Psoas muscle (tissue), 8 donors: ENCODE measurements at regions of chr15 and their contacts with region 1.

Region 1: GRCh38 chr15:56232058-56232457 is 11.6 kb downstream of the RFX7 start:
- DNase-seq: no peak
- ATAC-seq: no peak
- H3K4me3 ChIP-seq: no peak overlapping the region
- H3K27ac ChIP-seq: no peak overlapping the region
- H3K4me1 ChIP-seq: peaks cover 18% of the 10 kb centered on the region
- H3K27me3 ChIP-seq: no peaks in the 10 kb centered on the region
- CTCF ChIP-seq: no peak

Region 2: DNA sequence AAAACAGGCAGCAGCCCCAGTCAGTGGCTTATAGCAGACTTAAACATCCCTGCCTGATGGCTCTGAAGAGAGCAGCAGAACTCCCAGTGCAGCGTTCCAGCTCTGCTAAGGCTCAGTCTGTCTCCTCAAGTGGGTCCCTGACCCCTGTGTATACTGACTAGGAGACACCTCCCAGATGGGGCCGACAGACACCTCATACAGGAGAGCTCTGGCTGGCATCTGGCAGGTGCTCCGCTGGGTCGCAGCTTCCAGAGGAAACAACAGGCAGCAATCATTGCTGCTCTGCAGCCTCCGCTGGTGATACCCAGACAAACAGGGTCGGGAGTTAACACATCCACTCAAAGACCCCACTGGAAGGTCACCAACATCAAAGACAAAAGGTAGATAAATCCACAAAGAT is 81.9 kb before region 1 on chr15:
- intact Hi-C with region 1: loop called in 1 of 2 experiments (anchors 10 kb)
- DNase-seq: no peak
- ATAC-seq: no peak
- H3K4me3 ChIP-seq: no peak overlapping the region
- H3K27ac ChIP-seq: no peak overlapping the region
- H3K4me1 ChIP-seq: peaks cover 3% of the 10 kb centered on the region
- H3K27me3 ChIP-seq: no peaks in the 10 kb centered on the region
- CTCF ChIP-seq: no peak

Region 3: GRCh38 chr15:56176996-56177395 is 55.1 kb before region 1 on chr15:
- intact Hi-C with region 1: no loop called
- DNase-seq: no peak
- ATAC-seq: peak; percentile 49 to 85 (median 79)
- H3K4me3 ChIP-seq: no peak overlapping the region
- H3K27ac ChIP-seq: no peak overlapping the region
- H3K4me1 ChIP-seq: no peaks in the 10 kb centered on the region
- H3K27me3 ChIP-seq: no peaks in the 10 kb centered on the region
- CTCF ChIP-seq: no peak